IMR-90 (cell line): ENCODE measurements at regions of chr20 and their contacts with region 1.

Region 1: GRCh38 chr20:58870239-58871014 is 17.9 kb downstream of the GNAS start:
- DNase-seq: peak; percentile 47
- ATAC-seq: peak; percentile 94
- H3K4me3 ChIP-seq: no peak overlapping the region
- H3K27ac ChIP-seq: no peak overlapping the region
- H3K4me1 ChIP-seq: no peaks in the 10 kb centered on the region
- H3K27me3 ChIP-seq: peaks cover 19% of the 10 kb centered on the region
- CTCF ChIP-seq: peak; percentile 92
- POLR2A ChIP-seq: no peak
- RAD21 ChIP-seq: peak; percentile 94

Region 2: GRCh38 chr20:59032023-59032712 is 161.7 kb after region 1 on chr20 and contains the start of gene ATP5F1E:
- CTCF ChIA-PET with region 1: no interaction called
- POLR2A ChIA-PET with region 1: no interaction called
- dilution Hi-C with region 1: no loop called
- in situ Hi-C with region 1: no loop called
- intact Hi-C with region 1: loop called (anchors 5 kb)
- DNase-seq: peak; percentile 89
- ATAC-seq: peak; percentile 99
- H3K4me3 ChIP-seq: peak within 1 kb of the TSS; percentile 93
- H3K27ac ChIP-seq: peak within 1 kb of the TSS; percentile 94
- H3K4me1 ChIP-seq: peaks cover 9% of the 10 kb centered on the region
- H3K27me3 ChIP-seq: no peaks in the 10 kb centered on the region
- CTCF ChIP-seq: no peak
- POLR2A ChIP-seq: peak; percentile 79
- RAD21 ChIP-seq: no peak
- total RNA-seq, gene ATP5F1E: 3.8 and 12.2 TPM in 2 replicates

Region 3: GRCh38 chr20:59087829-59088433 is 217.5 kb after region 1 on chr20:
- CTCF ChIA-PET with region 1: no interaction called
- POLR2A ChIA-PET with region 1: no interaction called
- dilution Hi-C with region 1: no loop called
- in situ Hi-C with region 1: no loop called
- intact Hi-C with region 1: loop called (anchors 5 kb)
- DNase-seq: peak; percentile 47
- ATAC-seq: peak; percentile 73
- H3K4me3 ChIP-seq: no peak overlapping the region
- H3K27ac ChIP-seq: no peak overlapping the region
- H3K4me1 ChIP-seq: peaks cover 2% of the 10 kb centered on the region; the same call in 1 of the 2 replicates
- H3K27me3 ChIP-seq: peaks cover 10% of the 10 kb centered on the region
- CTCF ChIP-seq: peak; percentile 70
- POLR2A ChIP-seq: no peak
- RAD21 ChIP-seq: peak; percentile 56

Region 4: DNA sequence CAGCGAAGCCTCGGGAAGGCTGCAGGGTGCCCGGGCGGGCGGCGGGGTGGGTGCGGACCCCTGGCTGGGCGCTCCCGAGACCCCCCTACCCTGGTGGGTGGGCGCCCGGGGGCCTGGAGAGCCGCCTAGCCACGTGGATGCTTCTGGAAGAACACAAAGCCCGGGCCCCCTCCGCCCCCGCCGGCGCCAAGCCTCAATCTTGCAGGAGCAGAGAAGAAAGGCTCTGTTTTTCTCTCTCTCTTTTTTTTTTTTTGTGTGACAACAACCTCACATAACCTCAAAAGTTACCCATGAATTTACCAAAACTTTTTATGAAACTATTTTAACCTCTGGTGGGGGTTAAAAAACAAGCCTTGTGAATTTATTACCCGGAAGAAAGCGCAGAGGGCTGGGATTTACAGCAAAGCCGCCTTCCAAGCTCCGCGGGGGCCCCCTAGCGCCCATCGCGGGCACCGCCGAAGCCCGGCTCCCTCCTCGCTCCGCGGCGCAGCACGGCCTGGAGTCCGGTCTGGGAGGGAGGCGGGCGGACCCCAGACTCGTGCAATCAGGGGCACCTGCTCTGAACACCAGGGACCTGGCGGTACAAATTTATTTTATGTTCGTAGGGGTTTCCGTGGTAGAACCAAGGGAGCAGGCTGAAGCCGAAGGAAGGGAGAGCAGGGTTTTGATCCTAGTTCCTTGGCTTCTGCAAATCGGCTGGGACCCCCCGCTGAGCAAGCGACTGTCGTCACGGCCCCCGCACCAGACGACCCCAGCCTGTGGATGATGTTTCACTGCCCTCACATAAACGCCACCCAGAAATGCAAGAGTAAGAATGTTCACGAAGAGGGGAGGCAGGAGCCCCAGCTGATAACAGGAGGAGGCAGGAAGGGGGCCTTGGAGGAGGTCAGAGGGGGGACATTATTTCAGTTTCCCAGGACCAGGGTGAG is 352.1 kb after region 1 on chr20:
- CTCF ChIA-PET with region 1: interaction called, 17 read pairs
- POLR2A ChIA-PET with region 1: no interaction called
- dilution Hi-C with region 1: no loop called
- in situ Hi-C with region 1: loop called (anchors 5 kb)
- intact Hi-C with region 1: loop called (anchors 1 kb)
- DNase-seq: peak; percentile 66
- ATAC-seq: peak; percentile 99
- H3K4me3 ChIP-seq: peak overlapping the region; percentile 33
- H3K27ac ChIP-seq: no peak overlapping the region
- H3K4me1 ChIP-seq: no peaks in the 10 kb centered on the region
- H3K27me3 ChIP-seq: peaks cover 44% of the 10 kb centered on the region
- CTCF ChIP-seq: peak; percentile 94
- POLR2A ChIP-seq: no peak
- RAD21 ChIP-seq: peak; percentile 92

Region 5: DNA sequence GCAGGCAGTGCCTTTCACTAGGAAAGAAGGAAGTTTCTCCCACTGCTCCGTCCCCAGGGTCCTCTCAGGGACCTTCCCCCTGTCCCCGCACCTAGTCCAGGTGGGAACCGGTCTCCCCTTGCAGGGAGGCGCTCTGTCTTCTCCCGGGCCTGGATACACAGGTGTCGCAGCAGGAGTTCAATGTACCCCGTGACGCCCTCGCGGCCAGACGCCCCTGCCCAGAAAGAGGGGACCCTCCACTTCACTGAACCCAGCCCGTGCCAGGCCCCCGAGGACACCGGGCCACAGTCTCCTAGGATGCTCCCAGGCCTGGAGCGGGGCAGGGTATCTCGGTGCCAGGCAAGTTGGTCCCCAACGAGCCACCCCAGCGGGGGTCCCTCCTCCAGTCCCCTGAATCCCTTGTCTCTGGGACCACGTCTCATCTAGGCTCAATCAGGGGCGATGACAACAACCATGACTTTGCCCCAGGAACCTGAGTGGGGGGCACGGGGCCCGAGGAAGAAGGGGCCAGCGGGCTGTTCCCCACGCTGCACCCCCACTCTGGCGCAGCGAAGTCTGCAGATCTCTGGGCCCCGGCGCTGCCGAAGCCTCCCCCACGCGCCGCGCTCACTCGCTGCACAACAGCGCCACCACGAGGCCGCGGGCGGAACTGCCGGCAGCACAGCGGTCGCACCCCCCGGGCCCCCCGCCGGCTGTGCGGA is 533.0 kb after region 1 on chr20:
- CTCF ChIA-PET with region 1: interaction called, 4 read pairs
- POLR2A ChIA-PET with region 1: no interaction called
- dilution Hi-C with region 1: no loop called
- in situ Hi-C with region 1: no loop called
- intact Hi-C with region 1: loop called (anchors 5 kb)
- DNase-seq: no peak
- ATAC-seq: peak; percentile 56; the same call in 1 of the 2 replicates
- H3K4me3 ChIP-seq: no peak overlapping the region
- H3K27ac ChIP-seq: no peak overlapping the region
- H3K4me1 ChIP-seq: no peaks in the 10 kb centered on the region
- H3K27me3 ChIP-seq: peaks cover 12% of the 10 kb centered on the region
- CTCF ChIP-seq: peak; percentile 65
- POLR2A ChIP-seq: no peak
- RAD21 ChIP-seq: peak; percentile 60

Region 6: GRCh38 chr20:59455402-59456341 is 585.2 kb after region 1 on chr20:
- CTCF ChIA-PET with region 1: interaction called, 7 read pairs
- POLR2A ChIA-PET with region 1: interaction called, 3 read pairs
- dilution Hi-C with region 1: no loop called
- in situ Hi-C with region 1: no loop called
- intact Hi-C with region 1: loop called (anchors 1 kb)
- DNase-seq: peak; percentile 10
- ATAC-seq: peak; percentile 21; the same call in 1 of the 2 replicates
- H3K4me3 ChIP-seq: no peak overlapping the region
- H3K27ac ChIP-seq: no peak overlapping the region
- H3K4me1 ChIP-seq: no peaks in the 10 kb centered on the region
- H3K27me3 ChIP-seq: no peaks in the 10 kb centered on the region
- CTCF ChIP-seq: peak; percentile 55
- POLR2A ChIP-seq: no peak
- RAD21 ChIP-seq: peak; percentile 62

Region 7: DNA sequence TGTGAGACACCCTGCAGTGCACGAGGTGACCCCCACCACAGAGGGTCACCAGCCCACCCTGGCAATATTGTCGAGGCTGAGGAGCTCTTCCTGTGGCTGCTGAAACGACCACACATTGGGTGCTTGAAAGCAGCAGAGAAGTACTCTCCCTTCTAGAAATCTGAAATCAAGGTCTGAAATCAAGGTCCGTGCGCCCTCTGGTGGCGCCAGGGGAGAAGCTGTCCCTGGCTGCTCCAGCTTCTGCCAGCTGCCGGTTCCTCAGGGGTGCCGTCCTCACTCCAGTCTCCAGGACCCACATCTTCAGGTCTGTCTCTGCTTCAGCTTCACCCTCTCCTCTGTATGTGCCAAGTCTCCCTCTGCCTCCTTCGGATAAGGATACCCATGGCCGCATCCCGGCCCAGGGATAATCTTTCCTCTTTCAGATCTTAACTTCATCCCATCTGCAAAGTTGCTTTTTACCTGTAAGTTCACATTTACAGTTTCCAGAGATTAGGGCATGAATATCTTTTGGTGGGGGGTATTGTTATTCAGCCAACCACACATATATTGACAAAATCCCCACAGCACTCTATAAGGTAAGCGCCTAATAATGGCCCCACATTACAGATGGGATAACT is 625.6 kb after region 1 on chr20:
- CTCF ChIA-PET with region 1: no interaction called
- POLR2A ChIA-PET with region 1: no interaction called
- dilution Hi-C with region 1: no loop called
- in situ Hi-C with region 1: loop called (anchors 10 kb)
- intact Hi-C with region 1: loop called (anchors 1 kb)
- DNase-seq: peak; percentile 53
- ATAC-seq: peak; percentile 89
- H3K4me3 ChIP-seq: no peak overlapping the region
- H3K27ac ChIP-seq: no peak overlapping the region
- H3K4me1 ChIP-seq: no peaks in the 10 kb centered on the region
- H3K27me3 ChIP-seq: no peaks in the 10 kb centered on the region
- CTCF ChIP-seq: peak; percentile 79
- POLR2A ChIP-seq: no peak
- RAD21 ChIP-seq: peak; percentile 63